ENCODE measurements at regions of chr12 and their contacts with region 1.

Region 1: GRCh38 chr12:6873094-6874014 is at the start of gene SPSB2:
- DNase-seq: peak; percentile 99
- ATAC-seq: peak; percentile 82
- H3K4me3 Mint-ChIP-seq: peak within 1 kb of the TSS; percentile 91
- H3K27ac Mint-ChIP-seq: peak within 1 kb of the TSS; percentile 89
- H3K4me1 Mint-ChIP-seq: peaks cover 45% of the 10 kb centered on the region
- H3K27me3 Mint-ChIP-seq: no peaks in the 10 kb centered on the region
- CTCF ChIP-seq: no peak
- total RNA-seq, gene SPSB2: 2.2 to 2.6 TPM

Region 2: DNA sequence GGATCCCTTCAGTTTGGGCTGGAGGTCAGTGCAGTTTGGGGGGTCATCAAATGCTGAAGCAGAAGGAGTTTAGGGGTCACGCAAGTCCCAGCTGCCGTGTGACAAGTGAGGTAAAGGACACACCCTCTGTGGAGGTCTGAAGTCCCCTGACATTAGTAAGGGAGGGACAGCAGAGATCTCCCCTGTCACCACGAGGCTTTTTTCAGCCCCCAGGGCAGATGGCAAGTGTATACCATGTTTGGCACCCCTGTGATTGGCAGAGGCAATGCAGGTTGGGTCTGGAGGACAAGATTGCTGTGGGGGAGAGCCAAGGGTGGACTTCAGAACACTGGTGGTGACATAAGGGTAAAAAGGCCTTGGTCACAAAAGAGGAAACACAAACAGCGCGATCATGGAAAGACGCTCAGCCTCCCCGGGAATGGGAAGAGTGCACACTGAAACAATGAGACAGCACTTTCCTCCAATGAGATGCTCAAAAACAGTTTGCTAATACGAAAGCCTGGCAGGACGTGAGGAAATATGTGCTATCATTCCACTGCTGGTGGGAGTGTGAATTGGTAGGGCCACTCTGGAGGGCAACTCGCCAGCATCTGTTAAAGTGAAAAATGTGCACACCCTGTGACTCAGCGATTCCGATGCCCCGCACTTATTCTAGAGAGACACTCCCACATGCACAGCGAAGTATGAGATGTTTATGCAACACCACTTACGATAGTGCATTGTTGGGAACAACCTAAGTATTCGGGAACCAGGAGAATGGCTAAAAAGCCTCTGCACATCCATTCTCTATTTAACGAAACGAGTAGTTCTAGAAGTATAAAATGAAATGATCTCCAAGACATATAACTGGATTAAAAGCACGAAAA is 443.0 kb before region 1 on chr12:
- CTCF ChIA-PET with region 1: no interaction called
- POLR2A ChIA-PET with region 1: no interaction called
- intact Hi-C with region 1: no loop called
- DNase-seq: peak; percentile 90
- ATAC-seq: peak; percentile 6
- H3K4me3 Mint-ChIP-seq: peak overlapping the region; percentile 4
- H3K27ac Mint-ChIP-seq: peak overlapping the region; percentile 90
- H3K4me1 Mint-ChIP-seq: peaks cover 72% of the 10 kb centered on the region
- H3K27me3 Mint-ChIP-seq: no peaks in the 10 kb centered on the region
- CTCF ChIP-seq: no peak

Region 3: GRCh38 chr12:6851921-6852650 is 21.3 kb before region 1 on chr12 and contains the start of gene USP5:
- CTCF ChIA-PET with region 1: interaction called, 124 read pairs
- POLR2A ChIA-PET with region 1: interaction called, 218 read pairs
- intact Hi-C with region 1: no loop called
- DNase-seq: peak; percentile 99
- ATAC-seq: peak; percentile 79
- H3K4me3 Mint-ChIP-seq: peak within 1 kb of the TSS; percentile 86
- H3K27ac Mint-ChIP-seq: peak within 1 kb of the TSS; percentile 98
- H3K4me1 Mint-ChIP-seq: peaks cover 29% of the 10 kb centered on the region
- H3K27me3 Mint-ChIP-seq: no peaks in the 10 kb centered on the region
- CTCF ChIP-seq: no peak
- total RNA-seq, gene USP5: 109 to 112 TPM

Region 4: DNA sequence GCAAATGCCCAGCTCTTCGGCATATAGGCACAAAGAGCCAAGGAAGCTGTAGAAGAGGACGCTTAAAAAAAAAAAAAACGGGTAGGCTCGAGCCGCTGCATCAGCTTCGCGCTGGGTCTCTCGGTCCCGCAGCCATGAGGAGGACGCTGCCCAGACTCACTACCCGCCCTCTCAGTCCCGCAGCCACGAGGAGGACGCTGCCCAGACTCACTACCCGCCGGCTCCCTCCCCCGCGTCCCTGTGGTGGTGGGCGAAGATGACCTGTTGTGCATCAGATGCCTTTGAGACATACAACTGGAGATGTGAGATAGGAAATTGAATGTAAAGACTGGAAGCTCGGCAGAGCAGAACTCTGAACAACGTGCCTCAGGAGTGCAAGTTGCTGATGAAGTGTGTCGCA is 11.2 kb after region 1 on chr12:
- CTCF ChIA-PET with region 1: interaction called, 30 read pairs
- POLR2A ChIA-PET with region 1: interaction called, 79 read pairs
- intact Hi-C with region 1: no loop called
- DNase-seq: no peak
- ATAC-seq: no peak
- H3K4me3 Mint-ChIP-seq: no peak overlapping the region
- H3K27ac Mint-ChIP-seq: no peak overlapping the region
- H3K4me1 Mint-ChIP-seq: no peaks in the 10 kb centered on the region
- H3K27me3 Mint-ChIP-seq: no peaks in the 10 kb centered on the region
- CTCF ChIP-seq: no peak

Region 5: GRCh38 chr12:6904280-6905278 is 31.2 kb after region 1 on chr12 and contains the start of gene LRRC23:
- CTCF ChIA-PET with region 1: interaction called, 19 read pairs
- POLR2A ChIA-PET with region 1: interaction called, 17 read pairs
- intact Hi-C with region 1: no loop called
- DNase-seq: peak; percentile 100
- ATAC-seq: peak; percentile 96
- H3K4me3 Mint-ChIP-seq: no peak within 1 kb of the TSS
- H3K27ac Mint-ChIP-seq: no peak within 1 kb of the TSS
- H3K4me1 Mint-ChIP-seq: peaks cover 10% of the 10 kb centered on the region
- H3K27me3 Mint-ChIP-seq: no peaks in the 10 kb centered on the region
- CTCF ChIP-seq: no peak
- total RNA-seq, gene LRRC23: 4.6 to 5.3 TPM

Region 6: GRCh38 chr12:6937481-6938297 is 64.3 kb after region 1 on chr12:
- CTCF ChIA-PET with region 1: interaction called, 26 read pairs
- POLR2A ChIA-PET with region 1: interaction called, 32 read pairs
- intact Hi-C with region 1: no loop called
- DNase-seq: peak; percentile 96
- ATAC-seq: peak; percentile 88
- H3K4me3 Mint-ChIP-seq: peak overlapping the region; percentile 83
- H3K27ac Mint-ChIP-seq: peak overlapping the region; percentile 98
- H3K4me1 Mint-ChIP-seq: peaks cover 54% of the 10 kb centered on the region
- H3K27me3 Mint-ChIP-seq: no peaks in the 10 kb centered on the region
- CTCF ChIP-seq: peak; percentile 89